A673 (cell line): ENCODE measurements at regions of chr17 and their contacts with region 1.

Region 1: GRCh38 chr17:46193626-46194392 is 580 bp upstream of the KANSL1 start:
- DNase-seq: peak; percentile 97
- H3K4me3 ChIP-seq: peak overlapping the region; percentile 72
- H3K27ac ChIP-seq: peak overlapping the region; percentile 91
- H3K4me1 ChIP-seq: peaks cover 20% of the 10 kb centered on the region
- H3K27me3 ChIP-seq: no peaks in the 10 kb centered on the region
- CTCF ChIP-seq: peak; percentile 7; the same call in 1 of the 2 replicates

Region 2: DNA sequence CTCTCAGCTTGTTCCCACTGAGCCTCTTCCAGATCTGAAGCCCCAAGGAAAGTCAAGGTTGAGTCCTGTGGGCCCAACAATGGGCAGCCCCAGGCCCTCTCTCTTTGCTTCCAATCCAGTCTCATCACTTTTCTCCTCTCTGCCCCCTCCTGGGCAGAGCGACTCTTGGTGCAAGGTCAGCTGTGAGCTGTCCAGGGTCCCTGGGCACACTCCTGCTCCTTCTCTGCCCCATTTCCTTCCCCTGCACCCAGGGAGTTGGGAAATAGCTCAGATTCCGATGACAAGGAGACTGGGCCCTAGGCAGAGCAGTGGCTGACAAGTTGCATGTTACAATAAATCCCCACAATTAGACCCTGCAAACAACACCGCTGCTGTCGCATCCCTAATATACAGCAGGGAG is 425.8 kb before region 1 on chr17:
- CTCF ChIA-PET with region 1: no interaction called
- POLR2A ChIA-PET with region 1: no interaction called
- intact Hi-C with region 1: no loop called
- DNase-seq: no peak
- H3K4me3 ChIP-seq: no peak overlapping the region
- H3K27ac ChIP-seq: no peak overlapping the region
- H3K4me1 ChIP-seq: no peaks in the 10 kb centered on the region
- H3K27me3 ChIP-seq: peaks cover 8% of the 10 kb centered on the region
- CTCF ChIP-seq: no peak

Region 3: GRCh38 chr17:45883063-45883462 is 310.7 kb before region 1 on chr17:
- CTCF ChIA-PET with region 1: no interaction called
- POLR2A ChIA-PET with region 1: no interaction called
- intact Hi-C with region 1: no loop called
- DNase-seq: no peak
- H3K4me3 ChIP-seq: no peak overlapping the region
- H3K27ac ChIP-seq: no peak overlapping the region
- H3K4me1 ChIP-seq: no peaks in the 10 kb centered on the region
- H3K27me3 ChIP-seq: no peaks in the 10 kb centered on the region
- CTCF ChIP-seq: no peak

Region 4: GRCh38 chr17:46121841-46122485 is 71.8 kb before region 1 on chr17:
- CTCF ChIA-PET with region 1: no interaction called
- POLR2A ChIA-PET with region 1: no interaction called
- intact Hi-C with region 1: no loop called
- DNase-seq: no peak
- H3K4me3 ChIP-seq: no peak overlapping the region
- H3K27ac ChIP-seq: no peak overlapping the region
- H3K4me1 ChIP-seq: peaks cover 10% of the 10 kb centered on the region
- H3K27me3 ChIP-seq: no peaks in the 10 kb centered on the region
- CTCF ChIP-seq: no peak

Region 5: GRCh38 chr17:46154151-46154816 is 39.5 kb before region 1 on chr17:
- CTCF ChIA-PET with region 1: interaction called, 10 read pairs
- POLR2A ChIA-PET with region 1: no interaction called
- intact Hi-C with region 1: no loop called
- DNase-seq: peak; percentile 54
- H3K4me3 ChIP-seq: no peak overlapping the region
- H3K27ac ChIP-seq: no peak overlapping the region
- H3K4me1 ChIP-seq: peaks cover 60% of the 10 kb centered on the region
- H3K27me3 ChIP-seq: no peaks in the 10 kb centered on the region
- CTCF ChIP-seq: no peak

Region 6: GRCh38 chr17:46179375-46179999 is 14.3 kb before region 1 on chr17:
- CTCF ChIA-PET with region 1: interaction called, 10 read pairs
- POLR2A ChIA-PET with region 1: interaction called, 6 read pairs
- intact Hi-C with region 1: no loop called
- DNase-seq: peak; percentile 33
- H3K4me3 ChIP-seq: no peak overlapping the region
- H3K27ac ChIP-seq: no peak overlapping the region
- H3K4me1 ChIP-seq: peaks cover 42% of the 10 kb centered on the region
- H3K27me3 ChIP-seq: no peaks in the 10 kb centered on the region
- CTCF ChIP-seq: no peak

Region 7: GRCh38 chr17:46212634-46213435 is 19.0 kb after region 1 on chr17:
- CTCF ChIA-PET with region 1: interaction called, 18 read pairs
- POLR2A ChIA-PET with region 1: no interaction called
- intact Hi-C with region 1: loop called (anchors 2 kb)
- DNase-seq: peak; percentile 81
- H3K4me3 ChIP-seq: no peak overlapping the region
- H3K27ac ChIP-seq: no peak overlapping the region
- H3K4me1 ChIP-seq: no peaks in the 10 kb centered on the region
- H3K27me3 ChIP-seq: no peaks in the 10 kb centered on the region
- CTCF ChIP-seq: peak; percentile 86